ENCODE measurements at regions of chr22 and their contacts with region 1.

Region 1: GRCh38 chr22:17570851-17571641 is 7.7 kb downstream of the SLC25A18 start:
- DNase-seq: peak; percentile 90 to 93 (median 92)
- ATAC-seq: peak; percentile 94
- H3K4me3 ChIP-seq: peak overlapping the region; percentile 27
- H3K27ac ChIP-seq: peak overlapping the region; percentile 98
- H3K4me1 ChIP-seq: peaks cover 9% of the 10 kb centered on the region
- H3K27me3 ChIP-seq: no peaks in the 10 kb centered on the region

Region 2: DNA sequence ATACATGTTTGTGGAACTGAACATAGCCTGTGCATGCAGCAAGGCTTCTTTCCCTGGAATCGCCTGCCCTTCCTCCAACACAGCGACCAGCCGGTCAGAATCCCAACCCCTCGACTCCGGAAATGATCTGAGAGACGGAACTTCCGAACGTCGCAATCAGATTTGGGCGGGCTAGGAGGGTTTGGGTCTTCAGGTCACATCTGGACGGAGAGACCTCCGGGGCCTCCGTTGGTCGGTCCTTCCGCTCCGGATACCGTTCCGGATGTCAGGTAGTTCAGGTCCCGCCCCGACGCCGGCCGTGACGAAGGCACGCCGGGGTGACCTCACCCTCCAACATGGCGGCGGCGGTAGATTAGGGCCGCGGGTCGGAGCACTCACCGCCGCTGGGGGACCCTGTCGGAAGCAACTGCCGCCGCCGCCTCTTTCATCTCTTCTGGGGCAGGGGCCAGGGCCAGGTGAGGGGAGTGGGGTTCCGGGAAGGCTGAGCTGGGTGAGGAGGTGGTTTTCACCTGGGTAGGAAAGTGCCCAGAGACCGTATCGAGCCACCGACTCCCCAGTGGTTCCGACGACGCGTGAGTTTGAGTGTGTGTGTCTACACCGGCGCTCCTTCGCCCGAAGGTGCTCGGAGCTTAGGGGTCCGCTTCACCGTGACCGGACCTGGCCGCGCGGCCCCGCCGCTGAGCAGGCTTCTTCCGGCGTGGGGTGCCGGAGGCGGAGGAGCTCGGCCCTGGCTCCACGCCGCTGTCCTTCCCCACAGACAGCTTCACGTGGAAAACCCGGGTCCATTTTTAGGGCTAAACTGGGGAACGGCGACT is 67.6 kb after region 1 on chr22 and contains the start of gene BCL2L13:
- intact Hi-C with region 1: loop called in 2 of 4 experiments (anchors 10 kb)
- DNase-seq: peak; percentile 93 to 97 (median 95)
- ATAC-seq: peak; percentile 98
- H3K4me3 ChIP-seq: peak within 1 kb of the TSS; percentile 78
- H3K27ac ChIP-seq: peak within 1 kb of the TSS; percentile 93
- H3K4me1 ChIP-seq: peaks cover 2% of the 10 kb centered on the region
- H3K27me3 ChIP-seq: no peaks in the 10 kb centered on the region
- total RNA-seq, gene BCL2L13: 51.6 to 62.9 (median 56.7) TPM

Measured in right cardiac atrium (tissue), 5 donors.